Mammary epithelial cell (primary cell): ENCODE measurements at regions of chr1 and their contacts with region 1.

Region 1: GRCh38 chr1:70376196-70376595 is 21.7 kb upstream of the ANKRD13C start:
- DNase-seq: no peak
- H3K4me3 ChIP-seq: no peak overlapping the region
- H3K27ac ChIP-seq: no peak overlapping the region
- H3K4me1 ChIP-seq: no peaks in the 10 kb centered on the region
- H3K27me3 ChIP-seq: no peaks in the 10 kb centered on the region
- CTCF ChIP-seq: no peak

Region 2: GRCh38 chr1:70436622-70437251 is 60.5 kb after region 1 on chr1:
- CTCF ChIA-PET with region 1: no interaction called
- dilution Hi-C with region 1: no loop called
- in situ Hi-C with region 1: no loop called
- intact Hi-C with region 1: no loop called
- DNase-seq: no peak
- H3K4me3 ChIP-seq: no peak overlapping the region
- H3K27ac ChIP-seq: no peak overlapping the region
- H3K4me1 ChIP-seq: no peaks in the 10 kb centered on the region
- H3K27me3 ChIP-seq: no peaks in the 10 kb centered on the region
- CTCF ChIP-seq: peak in 1 of 2 donors; percentile 31

Region 3: DNA sequence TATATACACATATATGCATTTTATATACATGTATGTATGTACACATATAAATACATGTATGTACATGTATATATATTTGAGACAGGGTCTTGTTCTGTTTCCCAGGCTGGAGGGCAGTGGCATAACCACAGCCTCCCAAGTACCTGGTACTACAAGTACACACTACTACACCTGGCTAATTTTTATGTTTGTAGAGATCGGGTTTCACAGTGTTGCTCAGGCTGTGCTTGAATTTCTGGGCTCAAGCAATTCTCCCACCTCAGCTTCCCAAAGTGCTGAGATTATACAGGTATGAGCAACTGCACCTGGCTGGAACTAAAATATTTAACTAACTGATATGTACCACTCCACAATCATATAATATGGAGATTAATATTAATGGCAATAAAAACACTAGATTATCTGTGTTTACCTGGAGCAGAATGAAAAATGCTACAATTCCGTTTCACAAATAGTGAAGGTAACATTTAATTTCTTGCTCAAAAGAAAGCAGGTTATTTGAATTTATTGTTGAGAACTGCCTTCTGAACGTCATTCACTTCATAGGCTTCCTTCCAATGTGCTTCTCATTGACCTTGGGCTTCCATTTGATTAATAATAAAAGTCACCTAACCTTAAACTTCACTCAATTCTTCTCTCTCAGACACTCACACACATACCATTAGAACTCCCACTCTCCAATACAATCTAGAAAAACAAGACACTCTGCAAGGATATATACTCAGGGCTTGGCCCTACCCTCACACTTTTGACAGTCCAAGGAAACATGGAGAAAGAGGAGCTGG is 614.5 kb after region 1 on chr1:
- CTCF ChIA-PET with region 1: no interaction called
- dilution Hi-C with region 1: no loop called
- in situ Hi-C with region 1: no loop called
- intact Hi-C with region 1: loop called (anchors 10 kb)
- DNase-seq: no peak
- H3K4me3 ChIP-seq: no peak overlapping the region
- H3K27ac ChIP-seq: no peak overlapping the region
- H3K4me1 ChIP-seq: no peaks in the 10 kb centered on the region
- H3K27me3 ChIP-seq: no peaks in the 10 kb centered on the region
- CTCF ChIP-seq: no peak